ENCODE measurements at regions of chr2 and their contacts with region 1.

Region 1: DNA sequence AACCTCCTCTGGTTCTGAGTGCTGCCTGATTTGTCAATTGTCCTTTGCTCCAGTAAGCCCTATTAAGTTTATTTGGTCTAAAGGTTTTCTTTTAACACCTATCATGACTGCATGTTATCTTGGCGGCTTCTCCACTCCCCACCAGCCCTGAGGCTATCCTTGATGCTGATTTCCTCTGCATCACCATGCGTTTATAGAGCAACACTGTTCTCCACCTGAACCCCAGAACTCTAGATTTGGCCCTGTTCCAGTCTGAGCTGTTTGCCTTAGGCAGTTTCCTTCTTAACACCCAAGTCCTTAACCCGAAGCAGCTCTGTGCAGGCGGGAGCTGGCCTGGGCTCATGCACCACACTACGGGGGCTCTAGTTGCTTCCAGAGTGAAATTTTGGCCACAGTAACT is 98.2 kb upstream of the NPAS2 start:
- DNase-seq: peak; percentile 55
- H3K4me3 ChIP-seq: no peak overlapping the region
- H3K27ac ChIP-seq: no peak overlapping the region
- H3K4me1 ChIP-seq: no peaks in the 10 kb centered on the region
- H3K27me3 ChIP-seq: no peaks in the 10 kb centered on the region
- CTCF ChIP-seq: no peak

Region 2: GRCh38 chr2:100302585-100302892 is 419.2 kb before region 1 on chr2:
- CTCF ChIA-PET with region 1: no interaction called
- dilution Hi-C with region 1: no loop called
- in situ Hi-C with region 1: no loop called
- intact Hi-C with region 1: no loop called
- DNase-seq: no peak
- H3K4me3 ChIP-seq: no peak overlapping the region
- H3K27ac ChIP-seq: no peak overlapping the region
- H3K4me1 ChIP-seq: no peaks in the 10 kb centered on the region
- H3K27me3 ChIP-seq: peaks cover 7% of the 10 kb centered on the region
- CTCF ChIP-seq: no peak

Region 3: GRCh38 chr2:100615471-100615870 is 106.2 kb before region 1 on chr2:
- CTCF ChIA-PET with region 1: no interaction called
- dilution Hi-C with region 1: no loop called
- in situ Hi-C with region 1: no loop called
- intact Hi-C with region 1: loop called (anchors 5 kb)
- DNase-seq: no peak
- H3K4me3 ChIP-seq: no peak overlapping the region
- H3K27ac ChIP-seq: no peak overlapping the region
- H3K4me1 ChIP-seq: no peaks in the 10 kb centered on the region
- H3K27me3 ChIP-seq: no peaks in the 10 kb centered on the region
- CTCF ChIP-seq: no peak

Region 4: GRCh38 chr2:100692381-100692780 is 29.3 kb before region 1 on chr2:
- CTCF ChIA-PET with region 1: no interaction called
- dilution Hi-C with region 1: no loop called
- in situ Hi-C with region 1: no loop called
- intact Hi-C with region 1: no loop called
- DNase-seq: peak; percentile 1
- H3K4me3 ChIP-seq: no peak overlapping the region
- H3K27ac ChIP-seq: no peak overlapping the region
- H3K4me1 ChIP-seq: peaks cover 3% of the 10 kb centered on the region
- H3K27me3 ChIP-seq: no peaks in the 10 kb centered on the region
- CTCF ChIP-seq: no peak

Region 5: DNA sequence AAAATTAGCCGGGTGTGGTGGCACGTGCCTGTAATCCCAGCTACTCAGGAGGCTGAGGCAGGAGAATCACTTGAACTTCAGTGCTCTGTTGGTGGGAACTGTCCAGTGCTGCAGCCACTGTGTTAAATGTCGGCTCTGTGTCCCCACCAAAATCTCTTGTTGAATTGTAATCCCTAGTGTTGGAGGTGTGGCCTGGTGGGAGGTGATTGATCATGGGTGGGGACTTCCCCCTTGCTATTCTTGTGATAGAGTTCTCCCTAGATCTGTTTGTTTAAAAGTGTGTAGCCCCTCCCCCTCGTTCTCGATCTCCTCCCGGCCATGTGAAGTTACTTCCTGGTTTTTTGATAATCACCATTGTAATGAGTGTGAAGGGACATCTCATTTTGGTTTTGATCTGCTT is 270.6 kb after region 1 on chr2:
- CTCF ChIA-PET with region 1: no interaction called
- dilution Hi-C with region 1: no loop called
- in situ Hi-C with region 1: loop called in 1 of 2 experiments (anchors 10 kb)
- intact Hi-C with region 1: no loop called
- DNase-seq: no peak
- H3K4me3 ChIP-seq: no peak overlapping the region
- H3K27ac ChIP-seq: no peak overlapping the region
- H3K4me1 ChIP-seq: no peaks in the 10 kb centered on the region
- H3K27me3 ChIP-seq: no peaks in the 10 kb centered on the region
- CTCF ChIP-seq: no peak

Region 6: GRCh38 chr2:101012054-101012705 is 290.5 kb after region 1 on chr2:
- CTCF ChIA-PET with region 1: no interaction called
- dilution Hi-C with region 1: no loop called
- in situ Hi-C with region 1: no loop called
- intact Hi-C with region 1: no loop called
- DNase-seq: no peak
- H3K4me3 ChIP-seq: no peak overlapping the region
- H3K27ac ChIP-seq: no peak overlapping the region
- H3K4me1 ChIP-seq: no peaks in the 10 kb centered on the region
- H3K27me3 ChIP-seq: no peaks in the 10 kb centered on the region
- CTCF ChIP-seq: no peak

Measured in mammary epithelial cell (primary cell).